Mucosa of descending colon (tissue), 3 donors: ENCODE measurements at regions of chr13 and their contacts with region 1.

Region 1: DNA sequence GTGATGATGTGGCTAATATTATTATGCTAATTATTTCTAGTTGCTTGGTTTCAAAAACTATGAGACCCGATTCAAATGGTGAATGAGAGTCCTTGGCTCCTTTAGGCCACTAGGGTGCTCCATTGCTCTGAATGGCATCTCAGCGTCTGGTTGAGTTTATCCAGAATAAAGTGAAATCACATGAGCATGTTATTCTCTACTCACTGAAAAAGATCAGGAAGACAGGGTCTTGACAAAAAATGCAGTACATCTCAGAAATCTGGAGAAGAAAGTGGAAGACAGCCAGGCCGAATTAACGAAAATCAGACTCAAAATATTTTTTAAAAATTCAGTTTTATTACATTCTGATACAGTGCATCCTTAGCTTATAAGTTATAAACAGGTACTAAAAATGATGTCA is 516.2 kb downstream of the MYO16 start:
- DNase-seq: peak in 1 of 3 donors; percentile 59
- ATAC-seq: peak; percentile 59
- H3K4me3 ChIP-seq: no peak overlapping the region
- H3K4me1 ChIP-seq: no peaks in the 10 kb centered on the region
- CTCF ChIP-seq: peak; percentile 14

Region 2: DNA sequence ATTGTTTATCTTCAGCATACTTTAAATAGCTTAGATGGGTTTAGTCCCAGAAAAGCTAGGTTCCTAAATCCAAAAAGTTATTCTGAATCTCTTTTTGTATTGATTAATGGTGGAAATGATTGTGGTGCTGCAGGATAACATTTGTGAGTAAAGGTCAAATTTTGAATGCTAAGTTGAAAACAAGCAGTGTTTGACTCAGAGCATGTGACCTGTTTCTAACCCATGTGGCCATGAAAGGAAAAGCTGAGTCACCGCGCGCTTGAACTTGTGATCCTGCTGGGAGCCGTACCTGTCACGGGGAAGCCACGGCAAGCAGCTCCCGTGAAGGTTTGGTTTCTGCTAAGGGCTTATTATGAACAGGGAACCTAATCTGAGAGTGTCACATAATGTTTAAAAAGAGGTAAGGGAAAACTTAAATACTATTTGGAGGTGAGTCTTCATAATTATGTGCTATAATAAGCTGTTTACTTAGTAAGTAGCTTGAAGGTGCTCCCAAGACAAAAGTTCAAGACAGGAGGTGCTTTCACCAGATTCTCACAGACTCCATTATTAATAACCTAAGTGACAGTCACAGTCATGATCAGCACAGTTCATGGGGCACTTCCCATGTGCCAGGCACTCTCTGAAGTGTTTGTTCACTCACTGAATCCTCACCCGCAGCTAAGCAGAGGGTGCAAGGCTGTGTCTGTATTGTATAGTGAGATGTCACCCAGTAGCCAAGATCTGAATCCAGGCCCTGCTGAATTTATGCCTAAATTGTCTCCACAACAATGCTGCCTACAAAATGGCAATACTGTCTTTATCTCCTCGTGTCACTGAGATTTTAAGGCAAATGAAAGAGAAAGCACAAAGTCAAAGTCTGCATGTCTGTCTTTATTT is 229.8 kb before region 1 on chr13:
- intact Hi-C with region 1: no loop called
- DNase-seq: peak; percentile 71 to 84 (median 81)
- ATAC-seq: peak; percentile 93
- H3K4me3 ChIP-seq: no peak overlapping the region
- H3K4me1 ChIP-seq: no peaks in the 10 kb centered on the region
- CTCF ChIP-seq: no peak

Region 3: GRCh38 chr13:109786457-109787134 is 641.0 kb after region 1 on chr13 and contains the start of gene IRS2:
- intact Hi-C with region 1: loop called in 1 of 2 experiments (anchors 5 kb)
- DNase-seq: peak; percentile 92 to 95 (median 94)
- ATAC-seq: peak; percentile 85
- H3K4me3 ChIP-seq: peak within 1 kb of the TSS; percentile 65
- H3K4me1 ChIP-seq: peaks cover 14% of the 10 kb centered on the region
- CTCF ChIP-seq: no peak
- total RNA-seq, gene IRS2: 14.0 to 31.4 (median 23.7) TPM

Region 4: DNA sequence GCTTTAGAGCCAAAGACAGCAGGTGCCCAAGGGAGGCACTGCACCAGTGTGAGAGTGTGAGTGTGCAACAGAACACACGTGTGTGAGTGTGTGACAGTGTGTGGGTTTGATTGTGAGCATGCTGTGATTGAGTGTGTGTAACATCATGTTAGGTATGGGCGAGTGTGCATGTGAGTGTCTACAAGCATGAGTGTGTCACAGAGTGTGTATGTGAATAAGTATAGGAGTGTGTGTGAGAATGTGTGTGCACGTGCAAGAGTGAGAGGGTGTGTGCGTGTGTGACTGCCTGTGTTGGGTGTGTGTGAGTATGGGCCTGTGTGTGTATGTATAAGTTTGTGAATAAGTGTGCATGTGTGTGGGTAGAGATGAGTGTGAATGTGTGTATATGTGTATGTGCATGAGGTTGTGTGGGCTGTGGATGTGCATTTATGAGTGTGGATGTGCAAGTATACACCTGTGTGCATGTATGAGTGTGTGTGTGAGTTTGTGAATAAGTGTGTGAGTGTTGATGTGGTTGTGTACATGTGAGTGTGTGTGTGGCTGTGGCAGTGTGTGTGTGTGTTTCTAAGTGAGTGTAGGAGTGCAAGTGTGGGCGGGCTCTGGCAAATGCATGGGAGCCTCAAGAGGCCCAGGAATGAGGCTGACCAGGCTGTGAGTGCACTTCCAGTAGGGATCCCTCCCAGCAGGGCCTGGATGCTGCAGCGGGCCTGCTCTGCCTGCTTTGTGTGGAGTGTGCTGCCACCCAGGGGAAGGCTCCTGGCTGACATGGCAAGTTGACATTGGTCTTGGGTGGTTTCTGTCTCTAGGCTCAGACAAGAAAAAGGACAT is 962.9 kb after region 1 on chr13:
- intact Hi-C with region 1: loop called in 1 of 2 experiments (anchors 5 kb)
- DNase-seq: peak in 2 of 3 donors; percentile 47 to 67
- ATAC-seq: peak; percentile 76
- H3K4me3 ChIP-seq: no peak overlapping the region
- H3K4me1 ChIP-seq: no peaks in the 10 kb centered on the region
- CTCF ChIP-seq: no peak